Sigmoid colon (tissue), 7 donors: ENCODE measurements at regions of chr1 and their contacts with region 1.

Region 1: DNA sequence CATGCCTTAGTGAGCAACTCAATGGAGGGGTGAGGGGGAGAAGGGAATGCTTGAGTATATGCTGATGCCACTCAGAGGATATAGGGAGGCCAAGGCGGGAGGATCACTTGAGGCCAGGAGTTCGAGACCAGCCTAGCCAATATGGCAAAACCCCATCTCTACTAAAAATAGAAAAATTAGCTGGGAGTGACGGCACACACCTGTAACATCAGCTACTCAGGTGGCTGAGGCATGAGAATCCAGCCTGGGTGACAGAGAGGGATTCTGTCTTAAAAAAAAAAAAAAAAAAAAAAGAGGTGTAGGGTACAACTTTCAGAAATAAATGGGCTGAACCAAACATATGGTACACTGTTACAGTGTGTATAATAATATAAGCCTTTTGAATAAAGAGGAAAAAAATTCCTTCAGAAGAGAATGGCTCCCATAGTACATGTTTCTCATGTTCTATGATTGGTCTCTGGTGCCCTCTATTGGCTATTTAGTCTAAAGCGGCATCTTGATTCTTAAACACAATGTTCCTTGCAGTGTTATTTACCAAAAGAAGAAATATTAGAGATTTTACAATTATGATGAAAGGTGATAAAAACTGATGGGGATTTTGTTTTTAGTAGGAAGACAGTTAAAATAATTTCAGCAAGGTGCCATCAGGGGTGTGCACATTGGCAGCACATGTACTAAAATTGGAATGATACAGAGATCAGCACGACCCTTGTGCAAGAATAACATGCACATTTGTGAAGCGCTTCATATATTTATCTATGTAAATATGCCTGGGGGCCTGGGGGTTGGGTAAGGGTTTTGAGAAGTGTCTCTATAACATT is 109.8 kb downstream of the PATJ start:
- DNase-seq: no peak
- H3K4me3 ChIP-seq: no peak overlapping the region
- H3K27ac ChIP-seq: no peak overlapping the region
- H3K4me1 ChIP-seq: peaks cover 0 to 8% (median 7%) of the 10 kb centered on the region in 4 donors
- H3K27me3 ChIP-seq: no peaks in the 10 kb centered on the region
- CTCF ChIP-seq: peak in 3 of 4 experiments; percentile 50 to 61 (median 54)
- EP300 ChIP-seq: no peak
- POLR2A ChIP-seq: no peak

Region 2: GRCh38 chr1:59971464-59971911 is 1880.6 kb before region 1 on chr1:
- intact Hi-C with region 1: loop called (anchors 5 kb)
- DNase-seq: peak; percentile 77
- H3K4me3 ChIP-seq: no peak overlapping the region
- H3K27ac ChIP-seq: no peak overlapping the region
- H3K4me1 ChIP-seq: peaks cover 0 to 14% (median 7%) of the 10 kb centered on the region in 4 donors
- H3K27me3 ChIP-seq: no peaks in the 10 kb centered on the region
- CTCF ChIP-seq: peak; percentile 24 to 90 (median 78)
- EP300 ChIP-seq: no peak
- POLR2A ChIP-seq: no peak

Region 3: GRCh38 chr1:60969971-60970509 is 882.0 kb before region 1 on chr1:
- intact Hi-C with region 1: loop called (anchors 5 kb)
- DNase-seq: no peak
- H3K4me3 ChIP-seq: no peak overlapping the region
- H3K27ac ChIP-seq: peak overlapping the region in 3 of 4 donors; percentile 5 to 22 (median 9)
- H3K4me1 ChIP-seq: peaks cover 0 to 22% (median 11%) of the 10 kb centered on the region in 4 donors
- H3K27me3 ChIP-seq: no peaks in the 10 kb centered on the region
- CTCF ChIP-seq: peak; percentile 22 to 45 (median 38)
- EP300 ChIP-seq: no peak
- POLR2A ChIP-seq: no peak

Region 4: GRCh38 chr1:61591351-61591750 is 260.7 kb before region 1 on chr1:
- intact Hi-C with region 1: loop called (anchors 5 kb)
- DNase-seq: no peak
- H3K4me3 ChIP-seq: peak overlapping the region in 2 of 4 donors; percentile 11 to 21
- H3K27ac ChIP-seq: peak overlapping the region in 3 of 4 donors; percentile 37 to 52 (median 50)
- H3K4me1 ChIP-seq: no peaks in the 10 kb centered on the region
- H3K27me3 ChIP-seq: no peaks in the 10 kb centered on the region
- CTCF ChIP-seq: no peak
- EP300 ChIP-seq: no peak
- POLR2A ChIP-seq: no peak

Region 5: DNA sequence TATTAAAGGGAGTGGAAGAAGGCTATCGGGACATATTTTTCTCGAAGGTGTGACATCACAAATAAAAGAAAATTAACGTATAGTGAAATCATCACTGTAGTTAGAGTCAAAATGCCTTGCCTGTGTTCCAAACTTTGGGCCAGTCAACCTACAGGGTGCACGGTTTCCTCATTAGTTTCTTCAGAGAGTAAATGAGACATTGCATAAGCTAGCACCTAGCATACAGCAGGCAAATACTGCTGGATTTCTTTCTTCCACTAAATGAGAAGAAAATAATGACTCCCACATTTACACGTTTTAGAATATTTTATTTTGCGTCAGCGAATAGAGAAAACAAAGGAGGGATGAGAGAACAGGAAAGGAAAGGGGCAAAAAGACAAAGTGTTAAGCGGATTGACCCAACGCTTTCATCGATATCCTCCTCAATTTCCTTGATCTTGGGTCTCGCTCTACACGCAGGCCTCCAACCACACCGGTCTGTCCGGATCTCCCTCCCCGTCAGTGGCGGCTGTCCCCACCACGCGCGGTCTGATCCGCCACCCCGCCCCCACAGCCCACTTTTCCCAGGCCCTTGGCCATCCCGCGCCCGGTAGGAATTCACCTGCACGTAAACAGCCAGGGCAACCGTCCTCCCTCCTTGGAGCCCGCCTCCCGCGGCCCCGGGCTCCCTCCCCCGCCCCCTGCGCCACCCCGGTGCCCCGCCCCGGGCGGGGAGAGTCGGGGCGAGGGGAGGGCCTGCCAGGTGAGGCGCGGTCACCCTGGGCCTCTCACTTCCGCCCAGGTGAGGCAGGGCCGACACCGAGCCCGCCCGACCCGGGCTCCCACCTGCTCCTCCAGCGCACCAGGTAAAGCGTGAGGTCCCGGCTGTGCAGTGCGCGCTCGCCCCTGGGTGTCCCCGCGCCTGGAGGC is 110.1 kb before region 1 on chr1 and contains the start of gene PATJ:
- intact Hi-C with region 1: loop called (anchors 5 kb)
- DNase-seq: peak; percentile 76
- H3K4me3 ChIP-seq: peak within 1 kb of the TSS; percentile 65 to 98 (median 94)
- H3K27ac ChIP-seq: peak within 1 kb of the TSS; percentile 94 to 98 (median 97)
- H3K4me1 ChIP-seq: peaks cover 0 to 27% (median 19%) of the 10 kb centered on the region in 4 donors
- H3K27me3 ChIP-seq: no peaks in the 10 kb centered on the region
- CTCF ChIP-seq: no peak
- EP300 ChIP-seq: no peak
- POLR2A ChIP-seq: no peak
- total RNA-seq, gene PATJ: 21.3 to 33.2 (median 24.0) TPM

Region 6: DNA sequence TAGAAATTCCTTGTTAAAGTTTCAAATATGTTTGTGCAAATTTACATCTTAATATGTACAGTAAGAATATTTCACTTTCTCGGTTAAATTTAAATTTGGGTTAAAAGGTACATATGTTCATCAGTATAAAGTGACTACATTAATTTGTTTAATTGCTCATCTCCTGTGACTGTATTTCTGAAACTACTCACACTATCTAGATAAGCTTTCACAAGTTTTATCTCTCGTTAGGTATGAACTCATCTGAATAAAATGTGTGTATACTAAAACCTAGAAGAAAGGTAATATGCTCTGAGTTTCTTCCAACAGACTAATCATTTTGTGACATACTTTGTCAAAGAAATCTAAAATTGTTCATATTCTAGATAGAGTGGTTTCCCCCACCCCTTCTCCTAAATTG is 40.9 kb after region 1 on chr1:
- intact Hi-C with region 1: no loop called
- DNase-seq: no peak
- H3K4me3 ChIP-seq: no peak overlapping the region
- H3K27ac ChIP-seq: no peak overlapping the region
- H3K4me1 ChIP-seq: no peaks in the 10 kb centered on the region
- H3K27me3 ChIP-seq: no peaks in the 10 kb centered on the region
- CTCF ChIP-seq: no peak
- EP300 ChIP-seq: no peak
- POLR2A ChIP-seq: no peak